ENCODE measurements at regions of chr2 and their contacts with region 1.

Region 1: GRCh38 chr2:24827321-24828237 is 34.4 kb downstream of the CENPO start:
- DNase-seq: peak; percentile 80
- H3K4me3 Mint-ChIP-seq: no peak overlapping the region
- H3K27ac Mint-ChIP-seq: peak overlapping the region; percentile 58
- H3K4me1 Mint-ChIP-seq: peaks cover 17% of the 10 kb centered on the region
- H3K27me3 Mint-ChIP-seq: no peaks in the 10 kb centered on the region

Region 2: DNA sequence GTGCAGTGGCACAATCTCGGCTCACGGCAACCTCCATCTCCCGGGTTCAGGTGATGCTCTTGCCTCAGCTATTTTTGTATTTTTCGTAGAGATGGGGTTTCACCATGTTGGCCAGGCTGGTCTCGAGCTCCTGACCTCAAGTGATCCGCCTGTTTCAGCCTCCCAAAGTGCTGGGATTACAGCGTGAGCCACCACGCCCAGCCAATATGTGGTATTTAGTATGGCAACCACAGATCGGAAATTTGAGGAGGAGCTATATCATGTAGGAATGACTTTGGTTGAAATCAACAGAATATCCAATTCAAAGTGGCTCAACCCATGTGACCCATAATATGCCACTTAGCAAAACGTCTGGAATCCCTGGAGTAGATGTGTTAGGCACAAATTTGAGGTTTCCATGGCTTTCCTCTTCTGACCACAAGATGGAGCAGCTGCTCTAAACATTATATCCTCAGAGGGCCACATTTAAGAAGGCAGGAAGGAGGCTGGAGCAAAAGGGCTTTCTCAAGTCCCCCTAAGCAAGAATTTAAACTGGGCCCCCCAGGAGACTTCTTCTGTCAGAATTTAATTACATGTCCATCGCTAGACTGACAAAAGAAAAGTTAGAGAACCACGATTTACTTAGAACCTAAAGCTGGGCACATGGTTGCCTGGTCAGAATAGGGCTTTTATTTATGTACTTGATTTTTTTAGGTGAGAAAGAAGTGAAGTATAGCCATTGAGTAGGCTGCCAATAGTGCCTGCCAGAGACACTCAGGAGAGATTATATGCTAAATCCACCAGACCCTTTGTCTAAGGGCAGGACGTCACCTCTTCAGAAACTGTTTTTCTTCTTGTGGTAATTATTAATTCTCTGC is 417.7 kb before region 1 on chr2:
- CTCF ChIA-PET with region 1: interaction called, 26 read pairs
- POLR2A ChIA-PET with region 1: no interaction called
- DNase-seq: peak; percentile 51
- H3K4me3 Mint-ChIP-seq: no peak overlapping the region
- H3K27ac Mint-ChIP-seq: no peak overlapping the region
- H3K4me1 Mint-ChIP-seq: no peaks in the 10 kb centered on the region
- H3K27me3 Mint-ChIP-seq: peaks cover 10% of the 10 kb centered on the region

Region 3: DNA sequence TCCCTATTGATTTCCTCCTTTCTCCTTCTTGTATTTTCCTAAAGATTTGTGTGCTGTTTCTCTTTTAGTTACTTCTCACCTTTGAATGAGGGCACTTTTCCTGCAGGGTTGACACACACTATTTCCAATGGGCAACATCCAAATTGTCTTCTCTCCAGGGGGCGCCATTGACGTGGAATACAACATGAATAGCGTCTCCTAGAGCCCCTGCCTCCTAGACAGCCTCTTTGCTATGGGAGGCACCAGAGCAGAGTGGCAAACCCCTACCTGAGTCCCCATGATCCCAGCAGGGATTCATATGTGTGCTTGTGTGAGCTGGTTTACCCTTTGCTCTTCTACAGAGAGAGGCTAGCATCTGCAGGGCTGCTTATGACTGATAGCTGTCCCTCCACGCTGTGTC is 405.9 kb before region 1 on chr2:
- CTCF ChIA-PET with region 1: interaction called, 12 read pairs
- POLR2A ChIA-PET with region 1: no interaction called
- DNase-seq: peak; percentile 68
- H3K4me3 Mint-ChIP-seq: no peak overlapping the region
- H3K27ac Mint-ChIP-seq: no peak overlapping the region
- H3K4me1 Mint-ChIP-seq: no peaks in the 10 kb centered on the region
- H3K27me3 Mint-ChIP-seq: no peaks in the 10 kb centered on the region

Measured in activated CD4-positive, alpha-beta T cell treated with anti-CD3 and anti-CD28 coated beads, Interleukin-2, amount 10 ng/mL, durations not matched to agents 7 days and 5 days (primary cell).